ENCODE measurements at regions of chr1 and their contacts with region 1.

Region 1: DNA sequence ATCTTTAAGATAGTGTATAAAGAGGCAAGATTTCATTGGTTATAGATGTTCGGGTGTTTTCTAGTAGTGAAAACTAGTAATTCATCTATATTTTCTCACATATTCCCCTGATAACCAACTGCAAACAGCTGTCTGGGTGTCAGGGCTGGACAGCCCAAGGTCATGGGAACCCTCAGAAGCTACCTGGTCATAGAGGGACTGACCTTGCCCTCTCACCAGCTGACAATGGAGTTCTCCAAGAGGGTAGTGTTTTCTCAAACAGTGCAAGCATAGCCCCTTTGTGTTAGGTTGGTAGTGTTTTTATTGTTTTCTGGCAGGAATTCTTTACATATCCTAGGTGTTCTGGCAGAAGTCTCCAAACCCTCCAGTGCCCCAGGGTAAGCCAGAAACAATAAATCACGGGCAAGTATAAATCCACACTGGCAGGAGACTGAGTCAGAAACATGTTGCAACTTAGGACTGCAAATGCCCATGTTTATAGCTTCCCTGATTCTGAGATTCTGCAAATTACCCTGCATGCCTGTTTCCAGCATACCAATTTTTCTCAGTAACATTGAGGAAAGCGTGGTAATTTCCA is 82.9 kb upstream of the ATP1A1 start:
- DNase-seq: no peak
- ATAC-seq: no peak
- H3K4me3 ChIP-seq: no peak overlapping the region
- H3K27ac ChIP-seq: no peak overlapping the region
- H3K4me1 ChIP-seq: no peaks in the 10 kb centered on the region
- H3K27me3 ChIP-seq: no peaks in the 10 kb centered on the region; the same call in 1 of the 2 replicates
- CTCF ChIP-seq: no peak
- POLR2A ChIP-seq: no peak
- RAD21 ChIP-seq: no peak

Region 2: DNA sequence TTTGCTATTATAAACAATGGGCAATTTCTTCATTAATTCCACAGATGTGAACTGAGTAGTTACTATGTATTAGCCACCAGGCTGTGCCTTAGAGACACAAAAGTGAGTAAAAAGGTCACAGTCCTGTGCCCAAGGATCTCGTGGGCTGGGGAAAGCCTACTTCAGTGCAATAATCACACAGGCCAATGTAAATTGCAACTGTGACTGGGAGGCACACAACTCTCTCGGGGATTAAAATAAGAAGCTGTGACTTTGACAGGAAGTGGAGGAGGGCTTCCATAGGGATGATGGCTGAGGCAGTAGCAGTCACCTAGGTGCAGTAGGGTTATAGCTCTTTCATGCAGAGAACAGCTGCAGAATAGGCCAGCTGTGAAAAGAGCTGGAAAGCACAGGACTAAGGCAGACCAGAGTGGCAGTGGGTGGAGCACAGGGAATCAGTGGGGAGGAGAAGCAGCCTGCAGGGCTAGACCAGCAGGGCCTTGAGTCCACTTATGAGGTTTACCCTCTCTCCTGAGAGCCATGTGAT is 57.1 kb before region 1 on chr1:
- CTCF ChIA-PET with region 1: no interaction called
- POLR2A ChIA-PET with region 1: no interaction called
- dilution Hi-C with region 1: no loop called
- in situ Hi-C with region 1: loop called (anchors 10 kb)
- intact Hi-C with region 1: no loop called
- DNase-seq: no peak
- ATAC-seq: no peak
- H3K4me3 ChIP-seq: no peak overlapping the region
- H3K27ac ChIP-seq: no peak overlapping the region
- H3K4me1 ChIP-seq: no peaks in the 10 kb centered on the region
- H3K27me3 ChIP-seq: no peaks in the 10 kb centered on the region; the same call in 1 of the 2 replicates
- CTCF ChIP-seq: no peak
- POLR2A ChIP-seq: no peak
- RAD21 ChIP-seq: no peak

Measured in IMR-90 (cell line).